K562 (cell line): ENCODE measurements at regions of chr1 and their contacts with region 1.

Region 1: GRCh38 chr1:109151164-109151990 is 37.5 kb downstream of the ELAPOR1 start:
- DNase-seq: peak; percentile 52 to 71 (median 56)
- ATAC-seq: peak; percentile 86
- H3K4me3 ChIP-seq: no peak overlapping the region
- H3K27ac ChIP-seq: no peak overlapping the region
- H3K4me1 ChIP-seq: peaks cover 12 to 24% of the 10 kb centered on the region in 2 experiments; a peak in 4 of 5 replicates
- H3K27me3 ChIP-seq: no peaks in the 10 kb centered on the region; a peak in 1 of 5 replicates
- CTCF ChIP-seq: no peak
- EP300 ChIP-seq: no peak
- POLR2A ChIP-seq: no peak
- RAD21 ChIP-seq: no peak

Region 2: GRCh38 chr1:108592030-108592759 is 559.2 kb before region 1 on chr1:
- CTCF ChIA-PET with region 1: no interaction called
- POLR2A ChIA-PET with region 1: no interaction called
- in situ Hi-C with region 1: no loop called
- intact Hi-C with region 1: no loop called
- DNase-seq: no peak
- ATAC-seq: no peak
- H3K4me3 ChIP-seq: no peak overlapping the region
- H3K27ac ChIP-seq: no peak overlapping the region
- H3K4me1 ChIP-seq: peaks cover 0 to 2% of the 10 kb centered on the region in 2 experiments; a peak in 3 of 5 replicates
- H3K27me3 ChIP-seq: no peaks in the 10 kb centered on the region
- CTCF ChIP-seq: no peak
- EP300 ChIP-seq: no peak
- POLR2A ChIP-seq: no peak
- RAD21 ChIP-seq: no peak

Region 3: DNA sequence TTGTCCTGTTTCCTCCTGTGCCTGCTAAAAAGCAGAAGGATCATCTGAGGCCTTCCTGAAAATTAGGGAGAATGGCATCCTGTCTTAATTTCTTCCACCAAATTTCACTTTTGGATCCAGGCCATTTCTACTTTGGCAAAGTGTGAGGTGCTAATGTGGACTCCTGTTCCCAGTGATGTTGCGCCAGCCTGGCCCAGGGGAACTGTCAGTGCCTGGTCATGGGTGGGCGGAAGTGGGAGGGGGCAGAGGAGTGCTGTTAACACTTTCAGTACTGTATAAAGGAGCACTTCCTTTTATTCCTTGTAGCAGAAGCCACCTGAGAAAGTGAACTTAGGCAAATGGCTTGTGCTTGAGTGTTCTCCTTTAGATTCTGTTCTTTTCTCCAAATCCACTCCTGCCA is 17.6 kb before region 1 on chr1:
- CTCF ChIA-PET with region 1: no interaction called
- POLR2A ChIA-PET with region 1: interaction called, 10 read pairs
- in situ Hi-C with region 1: no loop called
- intact Hi-C with region 1: no loop called
- DNase-seq: no peak
- ATAC-seq: no peak
- H3K4me3 ChIP-seq: no peak overlapping the region
- H3K27ac ChIP-seq: no peak overlapping the region
- H3K4me1 ChIP-seq: peaks cover 27 to 32% of the 10 kb centered on the region in 2 experiments; a peak in 3 of 5 replicates
- H3K27me3 ChIP-seq: no peaks in the 10 kb centered on the region
- CTCF ChIP-seq: no peak
- EP300 ChIP-seq: no peak
- POLR2A ChIP-seq: no peak
- RAD21 ChIP-seq: no peak

Region 4: GRCh38 chr1:109140392-109140791 is 11.0 kb before region 1 on chr1:
- CTCF ChIA-PET with region 1: no interaction called
- POLR2A ChIA-PET with region 1: interaction called, 10 read pairs
- in situ Hi-C with region 1: no loop called
- intact Hi-C with region 1: no loop called
- DNase-seq: peak; percentile 71 to 79 (median 73)
- ATAC-seq: peak; percentile 84
- H3K4me3 ChIP-seq: no peak overlapping the region
- H3K27ac ChIP-seq: peak overlapping the region; percentile 41; the same call in 2 of the 3 replicates
- H3K4me1 ChIP-seq: peaks cover 11 to 17% of the 10 kb centered on the region in 2 experiments; a peak in 3 of 5 replicates
- H3K27me3 ChIP-seq: no peaks in the 10 kb centered on the region
- CTCF ChIP-seq: no peak
- EP300 ChIP-seq: peak; percentile 26; the same call in 1 of the 2 replicates
- POLR2A ChIP-seq: no peak
- RAD21 ChIP-seq: no peak

Region 5: GRCh38 chr1:109161858-109162606 is 10.7 kb after region 1 on chr1:
- CTCF ChIA-PET with region 1: no interaction called
- POLR2A ChIA-PET with region 1: interaction called, 10 read pairs
- in situ Hi-C with region 1: no loop called
- intact Hi-C with region 1: no loop called
- DNase-seq: no peak
- ATAC-seq: peak; percentile 59
- H3K4me3 ChIP-seq: no peak overlapping the region
- H3K27ac ChIP-seq: no peak overlapping the region
- H3K4me1 ChIP-seq: peaks cover 8 to 19% of the 10 kb centered on the region in 2 experiments
- H3K27me3 ChIP-seq: no peaks in the 10 kb centered on the region
- CTCF ChIP-seq: no peak
- EP300 ChIP-seq: no peak
- POLR2A ChIP-seq: no peak
- RAD21 ChIP-seq: no peak

Region 6: GRCh38 chr1:109208836-109209463 is 57.6 kb after region 1 on chr1:
- CTCF ChIA-PET with region 1: no interaction called
- POLR2A ChIA-PET with region 1: no interaction called
- in situ Hi-C with region 1: no loop called
- intact Hi-C with region 1: no loop called
- DNase-seq: no peak
- ATAC-seq: no peak
- H3K4me3 ChIP-seq: no peak overlapping the region
- H3K27ac ChIP-seq: no peak overlapping the region
- H3K4me1 ChIP-seq: peaks cover 8 to 15% of the 10 kb centered on the region in 2 experiments
- H3K27me3 ChIP-seq: no peaks in the 10 kb centered on the region
- CTCF ChIP-seq: no peak
- EP300 ChIP-seq: no peak
- POLR2A ChIP-seq: no peak
- RAD21 ChIP-seq: no peak